ENCODE measurements at regions of chr1 and their contacts with region 1.

Region 1: GRCh38 chr1:6245086-6245868 is 1.3 kb downstream of the HES3 start:
- DNase-seq: peak; percentile 65 to 86
- H3K4me3 ChIP-seq: peak overlapping the region; percentile 36
- H3K4me3 Mint-ChIP-seq: peak overlapping the region; percentile 62
- H3K27ac Mint-ChIP-seq: no peak overlapping the region
- H3K4me1 ChIP-seq: 0 out of 2 replicates have a peak, but pooled peaks cover 10% of the 10 kb centered on the region
- H3K4me1 Mint-ChIP-seq: peaks cover 5% of the 10 kb centered on the region
- H3K27me3 ChIP-seq: no peaks in the 10 kb centered on the region
- H3K27me3 Mint-ChIP-seq: peaks cover 7% of the 10 kb centered on the region
- CTCF ChIP-seq: peak; percentile 66 to 88

Region 2: GRCh38 chr1:6082430-6082971 is 162.8 kb before region 1 on chr1:
- CTCF ChIA-PET with region 1: interaction called, 10 read pairs
- POLR2A ChIA-PET with region 1: no interaction called
- intact Hi-C with region 1: no loop called
- DNase-seq: peak in 1 of 2 experiments; percentile 36
- H3K4me3 ChIP-seq: no peak overlapping the region
- H3K4me3 Mint-ChIP-seq: no peak overlapping the region
- H3K27ac Mint-ChIP-seq: no peak overlapping the region
- H3K4me1 ChIP-seq: no peaks in the 10 kb centered on the region
- H3K4me1 Mint-ChIP-seq: no peaks in the 10 kb centered on the region
- H3K27me3 ChIP-seq: no peaks in the 10 kb centered on the region; the same call in 1 of the 2 replicates
- H3K27me3 Mint-ChIP-seq: peaks cover 6% of the 10 kb centered on the region
- CTCF ChIP-seq: peak in 1 of 2 experiments; percentile 41

Region 3: GRCh38 chr1:6343506-6344405 is 98.5 kb after region 1 on chr1:
- CTCF ChIA-PET with region 1: interaction called, 3 read pairs
- POLR2A ChIA-PET with region 1: no interaction called
- intact Hi-C with region 1: loop called (anchors 2 kb)
- DNase-seq: peak in 1 of 2 experiments; percentile 67
- H3K4me3 ChIP-seq: no peak overlapping the region
- H3K4me3 Mint-ChIP-seq: no peak overlapping the region
- H3K27ac Mint-ChIP-seq: peak overlapping the region; percentile 39
- H3K4me1 ChIP-seq: no peaks in the 10 kb centered on the region
- H3K4me1 Mint-ChIP-seq: peaks cover 9% of the 10 kb centered on the region
- H3K27me3 ChIP-seq: no peaks in the 10 kb centered on the region
- H3K27me3 Mint-ChIP-seq: no peaks in the 10 kb centered on the region
- CTCF ChIP-seq: peak; percentile 58 to 59

Region 4: DNA sequence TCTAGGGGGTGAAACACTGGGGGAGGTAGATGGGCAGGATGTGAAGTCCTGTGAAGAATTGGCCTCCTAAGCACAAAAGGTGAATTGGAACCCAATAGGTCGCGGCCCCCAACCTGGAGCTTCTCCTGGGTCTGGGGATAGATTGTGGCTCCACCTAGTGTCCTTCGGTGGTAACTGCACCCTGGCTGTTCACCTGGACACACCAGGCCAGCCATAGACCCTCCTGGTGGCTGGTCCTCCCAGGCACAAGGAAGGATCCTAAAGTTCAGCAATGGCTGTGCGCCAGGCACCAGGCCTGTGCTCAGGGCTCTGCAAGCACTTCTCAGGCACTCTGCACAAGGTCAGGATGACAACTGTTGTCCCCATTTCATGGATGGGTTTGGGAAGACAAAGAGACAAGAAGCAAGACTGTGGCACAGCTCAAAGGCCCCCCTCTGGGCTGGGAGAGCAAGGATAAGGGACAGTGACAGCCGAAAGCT is 192.8 kb after region 1 on chr1:
- CTCF ChIA-PET with region 1: interaction called, 11 read pairs
- POLR2A ChIA-PET with region 1: no interaction called
- intact Hi-C with region 1: loop called (anchors 1 kb)
- DNase-seq: peak; percentile 84 to 86
- H3K4me3 ChIP-seq: no peak overlapping the region
- H3K4me3 Mint-ChIP-seq: no peak overlapping the region
- H3K27ac Mint-ChIP-seq: no peak overlapping the region
- H3K4me1 ChIP-seq: no peaks in the 10 kb centered on the region
- H3K4me1 Mint-ChIP-seq: peaks cover 13% of the 10 kb centered on the region
- H3K27me3 ChIP-seq: no peaks in the 10 kb centered on the region
- H3K27me3 Mint-ChIP-seq: no peaks in the 10 kb centered on the region
- CTCF ChIP-seq: peak; percentile 88 to 89